ENCODE measurements at regions of chr7 and their contacts with region 1.

Region 1: GRCh38 chr7:23570592-23571200 is 26.5 kb upstream of the CCDC126 start:
- DNase-seq: peak; percentile 37 to 70 (median 46)
- H3K4me3 ChIP-seq: no peak overlapping the region
- H3K4me3 Mint-ChIP-seq: peak overlapping the region in 1 of 7 donors; percentile 26
- H3K27ac ChIP-seq: no peak overlapping the region
- H3K27ac Mint-ChIP-seq: no peak overlapping the region
- H3K4me1 ChIP-seq: no peaks in the 10 kb centered on the region
- H3K4me1 Mint-ChIP-seq: no peaks in the 10 kb centered on the region
- H3K27me3 ChIP-seq: peaks cover under 1% of the 10 kb centered on the region
- H3K27me3 Mint-ChIP-seq: peaks cover 9 to 34% of the 10 kb centered on the region in 2 donors

Region 2: GRCh38 chr7:23347682-23348180 is 223.0 kb before region 1 on chr7:
- CTCF ChIA-PET with region 1: no interaction called
- POLR2A ChIA-PET with region 1: no interaction called
- DNase-seq: no peak
- H3K4me3 ChIP-seq: no peak overlapping the region
- H3K4me3 Mint-ChIP-seq: peak overlapping the region in 3 of 7 donors; percentile 65 to 77 (median 70)
- H3K27ac ChIP-seq: no peak overlapping the region
- H3K27ac Mint-ChIP-seq: peak overlapping the region in 1 of 8 donors; percentile 26
- H3K4me1 ChIP-seq: peaks cover 8% of the 10 kb centered on the region
- H3K4me1 Mint-ChIP-seq: peaks cover 14 to 20% (median 15%) of the 10 kb centered on the region in 3 donors
- H3K27me3 ChIP-seq: no peaks in the 10 kb centered on the region
- H3K27me3 Mint-ChIP-seq: peaks cover 0 to 3% of the 10 kb centered on the region in 2 donors

Region 3: DNA sequence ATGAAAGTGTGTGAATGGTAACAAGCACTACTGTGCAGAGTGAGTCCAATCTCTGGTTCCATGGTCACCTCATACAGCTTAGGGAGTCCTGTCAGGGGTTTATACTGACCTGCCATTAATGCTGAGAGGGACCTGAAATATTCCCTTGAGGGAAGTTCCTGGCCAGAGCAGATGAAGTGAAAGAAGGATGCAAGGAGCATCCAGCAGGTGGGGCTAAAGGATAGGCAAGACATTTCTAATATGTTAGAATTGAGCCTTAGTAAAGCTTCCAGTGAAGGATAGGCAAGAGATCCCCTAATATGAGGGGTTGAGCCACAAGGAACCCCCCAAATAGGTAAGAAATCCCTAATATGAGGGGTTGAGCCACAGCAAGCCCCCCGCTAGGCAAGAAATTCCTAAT is 83.8 kb after region 1 on chr7:
- CTCF ChIA-PET with region 1: no interaction called
- POLR2A ChIA-PET with region 1: no interaction called
- DNase-seq: no peak
- H3K4me3 ChIP-seq: no peak overlapping the region
- H3K4me3 Mint-ChIP-seq: no peak overlapping the region
- H3K27ac ChIP-seq: no peak overlapping the region
- H3K27ac Mint-ChIP-seq: no peak overlapping the region
- H3K4me1 ChIP-seq: no peaks in the 10 kb centered on the region
- H3K4me1 Mint-ChIP-seq: no peaks in the 10 kb centered on the region
- H3K27me3 ChIP-seq: no peaks in the 10 kb centered on the region
- H3K27me3 Mint-ChIP-seq: peaks cover 5 to 11% of the 10 kb centered on the region in 2 donors

Region 4: DNA sequence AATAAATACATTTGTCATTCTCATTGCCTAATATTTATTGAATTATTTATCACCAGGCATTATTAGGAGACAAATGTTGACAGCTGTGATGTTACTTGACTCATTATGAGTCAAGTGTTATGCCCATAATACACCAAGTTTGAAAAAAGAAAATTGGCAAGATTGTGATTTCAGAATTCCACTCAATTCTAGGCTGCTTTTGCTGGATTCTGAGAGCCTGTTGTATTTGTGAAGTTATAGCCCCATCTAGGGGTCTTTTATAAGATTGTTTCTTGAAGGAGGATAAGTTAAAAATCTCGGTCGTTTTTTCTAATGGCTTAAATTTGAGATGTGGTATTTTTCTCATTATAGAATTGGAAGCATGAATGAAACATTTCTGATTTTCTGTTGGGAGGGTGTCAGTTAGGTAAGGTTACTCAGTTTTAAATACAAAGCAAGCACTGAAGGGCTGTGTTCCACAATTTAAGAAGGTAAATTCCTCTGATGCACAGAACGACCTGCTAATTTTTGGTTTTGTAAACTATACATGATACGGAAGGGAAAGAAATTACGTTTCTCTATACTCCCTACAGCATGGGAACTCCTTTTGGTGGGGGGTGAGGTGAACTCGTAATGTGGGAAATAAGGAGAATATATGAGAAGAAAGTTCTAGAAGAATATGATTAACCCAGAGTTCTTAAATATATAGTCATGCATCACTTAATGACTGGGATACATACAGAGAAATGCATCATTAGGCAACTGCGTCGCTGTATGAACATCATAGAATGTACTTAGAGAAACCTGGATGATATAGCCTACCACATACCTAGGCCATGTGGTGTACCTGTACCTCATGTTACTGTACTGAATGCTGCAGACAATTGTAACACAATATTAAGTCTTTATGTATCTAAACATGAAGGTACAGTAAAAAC is 141.9 kb after region 1 on chr7:
- CTCF ChIA-PET with region 1: interaction called, 31 read pairs
- POLR2A ChIA-PET with region 1: no interaction called
- DNase-seq: peak in 2 of 5 donors; percentile 18 to 40
- H3K4me3 ChIP-seq: no peak overlapping the region
- H3K4me3 Mint-ChIP-seq: no peak overlapping the region
- H3K27ac ChIP-seq: no peak overlapping the region
- H3K27ac Mint-ChIP-seq: no peak overlapping the region
- H3K4me1 ChIP-seq: no peaks in the 10 kb centered on the region
- H3K4me1 Mint-ChIP-seq: no peaks in the 10 kb centered on the region
- H3K27me3 ChIP-seq: no peaks in the 10 kb centered on the region
- H3K27me3 Mint-ChIP-seq: peaks cover 0 to 4% of the 10 kb centered on the region in 2 donors